ENCODE measurements at regions of chr12 and their contacts with region 1.

Region 1: GRCh38 chr12:108664338-108665258 is 30.9 kb upstream of the SELPLG start:
- DNase-seq: peak; percentile 97
- H3K4me3 ChIP-seq: peak overlapping the region in 1 of 4 donors; percentile 5
- H3K27ac ChIP-seq: peak overlapping the region; percentile 83 to 90 (median 84)
- H3K4me1 ChIP-seq: peaks cover 54 to 88% (median 80%) of the 10 kb centered on the region in 4 donors
- H3K27me3 ChIP-seq: no peaks in the 10 kb centered on the region
- CTCF ChIP-seq: peak in 2 of 3 experiments; percentile 96 to 97
- EP300 ChIP-seq: no peak
- POLR2A ChIP-seq: no peak

Region 2: GRCh38 chr12:108495054-108495453 is 169.5 kb before region 1 on chr12:
- intact Hi-C with region 1: no loop called
- DNase-seq: no peak
- H3K4me3 ChIP-seq: no peak overlapping the region
- H3K27ac ChIP-seq: no peak overlapping the region
- H3K4me1 ChIP-seq: no peaks in the 10 kb centered on the region
- H3K27me3 ChIP-seq: peaks cover 0 to 29% (median 0%) of the 10 kb centered on the region in 4 donors
- CTCF ChIP-seq: peak in 2 of 3 experiments; percentile 27 to 37
- EP300 ChIP-seq: no peak
- POLR2A ChIP-seq: no peak

Region 3: GRCh38 chr12:108611884-108612415 is 52.6 kb before region 1 on chr12:
- intact Hi-C with region 1: no loop called
- DNase-seq: no peak
- H3K4me3 ChIP-seq: no peak overlapping the region
- H3K27ac ChIP-seq: no peak overlapping the region
- H3K4me1 ChIP-seq: peaks cover 6 to 29% (median 14%) of the 10 kb centered on the region in 4 donors
- H3K27me3 ChIP-seq: peaks cover 0 to 14% (median 0%) of the 10 kb centered on the region in 4 donors
- CTCF ChIP-seq: peak; percentile 31 to 46 (median 42)
- EP300 ChIP-seq: no peak
- POLR2A ChIP-seq: no peak

Region 4: DNA sequence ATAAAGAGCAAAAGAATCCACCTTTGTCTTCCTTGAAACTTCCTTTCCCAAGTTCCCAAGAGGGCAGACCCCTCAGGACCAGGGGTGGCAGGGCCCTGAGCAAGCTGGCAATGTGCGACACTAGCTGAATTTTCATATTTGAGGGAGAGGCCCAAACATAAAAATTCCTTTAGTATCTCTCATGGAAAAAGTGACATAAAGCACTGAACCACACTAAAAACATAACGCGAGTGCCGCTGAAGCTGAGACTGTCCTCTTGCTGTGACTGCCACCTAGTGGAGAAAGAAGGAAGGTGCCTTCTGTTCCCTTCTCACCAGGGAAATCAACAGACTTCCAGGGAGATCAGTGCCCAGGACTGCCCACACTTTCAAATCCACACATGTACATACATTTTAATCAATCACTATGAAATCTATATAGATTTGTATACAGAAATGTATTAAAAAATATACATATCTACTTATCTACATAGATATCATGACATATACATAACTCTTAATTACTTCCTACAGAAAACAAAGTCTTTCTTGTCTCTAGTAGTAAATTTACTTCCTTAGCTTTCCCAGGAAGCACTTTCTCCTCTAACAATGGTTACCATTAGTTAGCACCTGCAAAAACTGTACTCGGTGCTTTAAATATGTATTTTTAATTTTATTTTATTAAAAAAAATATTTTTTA is 139.0 kb after region 1 on chr12:
- intact Hi-C with region 1: loop called (anchors 2 kb)
- DNase-seq: peak; percentile 96
- H3K4me3 ChIP-seq: peak overlapping the region in 1 of 4 donors; percentile 39
- H3K27ac ChIP-seq: peak overlapping the region; percentile 90 to 95 (median 94)
- H3K4me1 ChIP-seq: peaks cover 69 to 87% (median 83%) of the 10 kb centered on the region in 4 donors
- H3K27me3 ChIP-seq: no peaks in the 10 kb centered on the region
- CTCF ChIP-seq: peak; percentile 96 to 99 (median 98)
- EP300 ChIP-seq: no peak
- POLR2A ChIP-seq: no peak

Region 5: DNA sequence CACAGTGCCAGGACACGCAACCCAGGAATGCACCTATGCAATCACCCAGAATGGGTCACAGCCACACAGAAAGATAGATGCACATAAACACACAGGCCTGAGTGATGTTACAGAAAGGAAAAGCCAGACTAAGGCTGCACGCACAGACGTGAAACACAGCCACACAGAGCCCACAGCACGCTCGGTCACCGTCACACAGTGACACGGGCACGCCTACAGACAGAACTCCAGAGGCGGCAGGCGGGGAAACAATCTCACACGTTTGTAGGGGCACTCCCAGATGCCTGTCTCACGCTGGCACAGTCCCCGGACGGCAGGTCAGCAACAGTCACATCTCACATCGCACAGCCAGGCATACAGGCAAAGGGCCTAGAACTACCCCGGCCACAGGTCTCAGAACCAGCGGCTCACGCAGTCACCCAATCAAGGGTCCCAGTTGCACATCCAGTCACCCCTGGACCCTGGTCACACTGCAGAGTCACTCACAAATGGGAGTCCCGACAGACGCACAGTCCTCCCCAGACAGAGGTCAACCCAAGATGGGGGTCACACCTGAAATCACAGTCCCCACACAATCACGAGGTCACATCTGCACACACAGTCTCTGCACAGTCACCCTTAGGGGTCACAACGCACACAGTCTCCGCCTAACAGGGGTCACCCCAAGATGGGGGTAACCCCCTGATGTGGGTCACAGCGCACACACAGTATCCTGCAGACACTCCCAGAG is 192.0 kb after region 1 on chr12:
- intact Hi-C with region 1: loop called (anchors 2 kb)
- DNase-seq: no peak
- H3K4me3 ChIP-seq: peak overlapping the region; percentile 63 to 82 (median 79)
- H3K27ac ChIP-seq: peak overlapping the region; percentile 87 to 96 (median 91)
- H3K4me1 ChIP-seq: peaks cover 59 to 71% (median 70%) of the 10 kb centered on the region in 4 donors
- H3K27me3 ChIP-seq: no peaks in the 10 kb centered on the region
- CTCF ChIP-seq: no peak
- EP300 ChIP-seq: no peak
- POLR2A ChIP-seq: peak; percentile 20

Measured in esophagus muscularis mucosa (tissue), 4 donors.